ENCODE measurements at regions of chr1 and their contacts with region 1.

Region 1: GRCh38 chr1:164780863-164781262 is 221.9 kb downstream of the PBX1 start:
- DNase-seq: peak in 2 of 5 donors; percentile 63 to 73
- ATAC-seq: peak; percentile 76 to 92 (median 86)
- H3K4me3 ChIP-seq: no peak overlapping the region
- H3K27ac ChIP-seq: peak overlapping the region in 11 of 12 donors; percentile 27 to 80 (median 61)
- H3K4me1 ChIP-seq: peaks cover 0 to 83% (median 43%) of the 10 kb centered on the region in 12 donors
- H3K27me3 ChIP-seq: no peaks in the 10 kb centered on the region
- CTCF ChIP-seq: no peak
- POLR2A ChIP-seq: peak in 1 of 2 donors; percentile 23

Region 2: DNA sequence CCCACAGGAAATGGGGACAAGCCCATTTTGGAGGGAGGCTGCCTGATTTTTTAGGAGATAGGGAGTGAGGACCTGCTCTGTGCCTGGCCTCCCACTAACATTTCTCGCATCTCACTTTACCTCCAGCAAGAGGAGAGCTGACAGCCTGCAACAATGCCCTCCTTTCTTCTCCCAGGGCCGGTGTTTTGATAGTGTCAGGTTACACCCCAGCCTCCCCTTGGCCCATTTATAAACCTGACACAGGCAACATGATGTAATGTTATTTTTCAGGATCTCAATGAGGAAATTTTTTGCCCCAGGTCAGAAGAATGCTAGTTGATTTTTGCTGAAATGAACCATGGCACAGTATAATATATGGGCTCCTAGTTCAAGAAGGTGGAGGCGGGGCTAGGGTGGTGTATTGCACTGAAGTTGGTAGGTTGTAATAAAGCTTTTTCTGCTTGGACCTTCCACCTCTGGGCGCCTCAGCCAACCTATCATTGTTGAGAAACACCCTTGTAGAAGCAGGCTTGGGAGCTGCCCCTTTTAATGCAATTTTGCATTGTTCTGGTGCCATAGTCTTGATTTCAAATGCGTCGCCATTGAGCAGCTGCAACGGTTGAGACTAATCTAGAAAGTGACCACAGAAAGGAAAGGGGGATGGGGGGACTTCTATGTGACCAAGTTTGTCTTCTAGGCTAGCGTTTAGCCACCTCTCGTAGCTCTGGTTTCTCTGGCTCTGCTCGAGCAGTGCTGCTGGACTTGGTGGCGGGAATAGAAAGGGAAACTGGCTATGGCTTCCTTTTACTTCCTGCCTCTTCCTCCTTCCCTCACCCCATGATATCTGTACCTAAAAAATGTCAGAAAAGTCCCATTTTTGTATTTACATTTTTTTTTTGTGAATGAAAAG is 168.9 kb before region 1 on chr1:
- intact Hi-C with region 1: loop called in 3 of 10 experiments (anchors 5 kb)
- DNase-seq: peak in 1 of 5 donors; percentile 31
- ATAC-seq: peak; percentile 52 to 70 (median 64)
- H3K4me3 ChIP-seq: no peak overlapping the region
- H3K27ac ChIP-seq: peak overlapping the region in 10 of 12 donors; percentile 2 to 74 (median 50)
- H3K4me1 ChIP-seq: peaks cover 5 to 96% (median 61%) of the 10 kb centered on the region in 12 donors
- H3K27me3 ChIP-seq: no peaks in the 10 kb centered on the region
- CTCF ChIP-seq: no peak
- POLR2A ChIP-seq: no peak

Region 3: DNA sequence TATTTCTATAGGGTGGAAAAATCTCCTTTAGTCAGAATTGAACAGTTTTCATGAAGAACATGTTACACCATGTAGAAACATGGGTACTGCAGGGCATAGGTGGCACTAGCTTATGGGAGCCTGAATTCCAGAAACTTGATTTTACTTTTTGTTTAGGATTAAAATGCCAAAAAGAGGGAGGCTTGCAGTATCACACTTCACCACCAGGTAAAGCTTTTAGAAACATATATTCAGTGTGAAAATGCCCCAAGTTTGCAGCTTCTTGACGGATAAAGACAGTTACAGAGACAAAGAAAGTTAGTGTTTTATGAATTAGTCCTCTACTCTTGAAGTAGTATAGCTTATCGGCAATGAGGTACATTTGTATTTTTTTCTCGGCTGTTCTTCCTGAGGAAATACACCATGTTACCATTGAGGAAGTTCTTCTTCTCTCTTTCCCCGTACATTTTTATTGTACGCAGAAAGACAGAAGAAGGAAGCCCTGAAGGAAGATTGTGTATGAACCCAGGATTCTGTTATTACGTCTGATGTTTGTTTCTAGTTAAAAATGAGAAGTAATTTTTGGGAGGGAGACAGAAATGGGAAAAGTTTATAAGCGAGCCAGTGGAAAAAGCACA is 155.8 kb before region 1 on chr1:
- intact Hi-C with region 1: loop called in 7 of 10 experiments (anchors 5 to 10 kb)
- DNase-seq: no peak
- ATAC-seq: no peak
- H3K4me3 ChIP-seq: no peak overlapping the region
- H3K27ac ChIP-seq: peak overlapping the region in 1 of 12 donors; percentile 49
- H3K4me1 ChIP-seq: peaks cover 0 to 48% (median 24%) of the 10 kb centered on the region in 12 donors
- H3K27me3 ChIP-seq: no peaks in the 10 kb centered on the region
- CTCF ChIP-seq: peak in 5 of 12 donors; percentile 11 to 43 (median 24)
- POLR2A ChIP-seq: no peak

Region 4: GRCh38 chr1:164707868-164708331 is 73.0 kb before region 1 on chr1:
- intact Hi-C with region 1: loop called in 4 of 10 experiments (anchors 5 to 10 kb)
- DNase-seq: peak in 2 of 5 donors; percentile 60 to 62
- ATAC-seq: peak; percentile 30 to 79 (median 44)
- H3K4me3 ChIP-seq: no peak overlapping the region
- H3K27ac ChIP-seq: peak overlapping the region in 11 of 12 donors; percentile 28 to 81 (median 60)
- H3K4me1 ChIP-seq: peaks cover 3 to 94% (median 70%) of the 10 kb centered on the region in 12 donors
- H3K27me3 ChIP-seq: no peaks in the 10 kb centered on the region
- CTCF ChIP-seq: no peak
- POLR2A ChIP-seq: no peak

Region 5: GRCh38 chr1:164716992-164717703 is 63.7 kb before region 1 on chr1:
- intact Hi-C with region 1: loop called in 1 of 10 experiments (anchors 5 kb)
- DNase-seq: no peak
- ATAC-seq: no peak
- H3K4me3 ChIP-seq: no peak overlapping the region
- H3K27ac ChIP-seq: peak overlapping the region in 2 of 12 donors; percentile 3 to 30
- H3K4me1 ChIP-seq: peaks cover 0 to 79% (median 41%) of the 10 kb centered on the region in 12 donors
- H3K27me3 ChIP-seq: no peaks in the 10 kb centered on the region
- CTCF ChIP-seq: no peak
- POLR2A ChIP-seq: no peak

Region 6: GRCh38 chr1:164880199-164880598 is 99.3 kb after region 1 on chr1:
- intact Hi-C with region 1: no loop called
- DNase-seq: no peak
- ATAC-seq: no peak
- H3K4me3 ChIP-seq: no peak overlapping the region
- H3K27ac ChIP-seq: no peak overlapping the region
- H3K4me1 ChIP-seq: peaks cover 0 to 7% (median 0%) of the 10 kb centered on the region in 12 donors
- H3K27me3 ChIP-seq: no peaks in the 10 kb centered on the region
- CTCF ChIP-seq: no peak
- POLR2A ChIP-seq: no peak

Region 7: DNA sequence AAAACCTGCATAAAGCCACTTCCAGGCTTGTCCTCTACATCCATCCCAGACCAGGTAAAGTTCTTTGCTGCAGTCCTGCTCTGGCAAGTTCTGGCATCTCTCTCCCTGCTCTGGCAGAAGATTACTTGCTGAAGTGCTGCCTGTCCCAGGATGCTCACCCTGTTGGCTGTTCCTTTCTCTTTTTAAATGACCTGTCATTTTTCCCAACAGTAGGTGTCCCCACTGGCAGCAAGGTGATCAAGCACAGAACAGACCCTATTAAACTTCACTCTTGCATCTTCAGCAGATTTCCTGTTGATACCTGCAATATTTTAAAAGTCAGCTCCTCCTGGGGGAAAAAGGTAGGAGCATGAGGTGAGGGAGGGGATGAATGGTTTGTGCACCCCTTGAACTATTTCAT is 110.7 kb after region 1 on chr1:
- intact Hi-C with region 1: no loop called
- DNase-seq: no peak
- ATAC-seq: no peak
- H3K4me3 ChIP-seq: no peak overlapping the region
- H3K27ac ChIP-seq: no peak overlapping the region
- H3K4me1 ChIP-seq: no peaks in the 10 kb centered on the region
- H3K27me3 ChIP-seq: no peaks in the 10 kb centered on the region
- CTCF ChIP-seq: no peak
- POLR2A ChIP-seq: no peak